Activated CD4-positive, alpha-beta memory T cell treated with anti-CD3 and anti-CD28 coated beads for 36 hours (primary cell): ENCODE measurements at regions of chr10 and their contacts with region 1.

Region 1: GRCh38 chr10:70832852-70833528 is 17.2 kb downstream of the SGPL1 start:
- DNase-seq: no peak
- H3K4me3 Mint-ChIP-seq: peak overlapping the region; percentile 48
- H3K27ac Mint-ChIP-seq: peak overlapping the region; percentile 82
- H3K4me1 Mint-ChIP-seq: peaks cover 85% of the 10 kb centered on the region
- H3K27me3 Mint-ChIP-seq: no peaks in the 10 kb centered on the region

Region 2: GRCh38 chr10:70815504-70816219 is 17.3 kb before region 1 on chr10 and contains the start of gene SGPL1:
- CTCF ChIA-PET with region 1: interaction called, 24 read pairs
- POLR2A ChIA-PET with region 1: interaction called, 14 read pairs
- intact Hi-C with region 1: loop called (anchors 1 kb)
- DNase-seq: peak; percentile 90
- H3K4me3 Mint-ChIP-seq: peak within 1 kb of the TSS; percentile 86
- H3K27ac Mint-ChIP-seq: peak within 1 kb of the TSS; percentile 82
- H3K4me1 Mint-ChIP-seq: peaks cover 49% of the 10 kb centered on the region
- H3K27me3 Mint-ChIP-seq: no peaks in the 10 kb centered on the region
- total RNA-seq, gene SGPL1: 65.6 to 67.0 TPM

Region 3: DNA sequence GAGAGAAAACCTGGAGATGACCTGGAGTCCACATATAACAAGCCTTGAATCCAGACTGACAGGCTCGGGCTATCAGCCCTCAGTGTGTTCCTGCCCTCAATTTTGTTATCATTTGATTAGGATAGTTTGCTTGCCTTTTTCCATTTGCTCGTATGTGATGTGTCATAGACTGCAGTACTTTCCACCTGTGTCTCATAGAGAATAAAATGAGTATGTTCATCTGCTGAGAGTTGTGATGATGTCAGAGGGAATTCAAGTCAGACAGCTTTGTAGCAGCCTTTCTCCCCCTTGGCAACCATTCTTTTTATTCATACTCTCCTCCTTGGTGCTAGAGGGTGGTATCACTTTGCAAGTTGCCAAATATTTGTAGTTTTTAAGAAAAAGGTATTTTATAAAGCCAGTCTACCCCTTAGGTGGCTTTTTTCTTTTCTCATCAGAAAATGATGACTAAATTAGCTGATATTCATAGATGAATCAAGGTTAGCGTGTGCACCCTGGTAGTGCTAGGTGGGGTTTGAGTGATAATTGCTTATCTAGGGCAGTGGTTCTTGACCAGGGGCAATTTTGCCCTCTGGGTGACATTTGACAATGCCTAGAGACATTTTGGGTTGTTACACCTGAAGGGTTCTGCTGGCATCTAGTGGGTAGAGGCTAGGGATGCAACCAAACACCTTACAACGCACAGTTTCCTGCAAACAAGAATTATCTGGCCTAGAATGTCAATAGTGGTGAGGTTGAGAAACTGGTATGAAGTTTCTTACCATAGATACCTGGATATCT is 11.8 kb before region 1 on chr10:
- CTCF ChIA-PET with region 1: interaction called, 24 read pairs
- POLR2A ChIA-PET with region 1: interaction called, 14 read pairs
- intact Hi-C with region 1: loop called (anchors 1 kb)
- DNase-seq: peak; percentile 38
- H3K4me3 Mint-ChIP-seq: peak overlapping the region; percentile 18
- H3K27ac Mint-ChIP-seq: peak overlapping the region; percentile 92
- H3K4me1 Mint-ChIP-seq: peaks cover 65% of the 10 kb centered on the region
- H3K27me3 Mint-ChIP-seq: no peaks in the 10 kb centered on the region

Region 4: DNA sequence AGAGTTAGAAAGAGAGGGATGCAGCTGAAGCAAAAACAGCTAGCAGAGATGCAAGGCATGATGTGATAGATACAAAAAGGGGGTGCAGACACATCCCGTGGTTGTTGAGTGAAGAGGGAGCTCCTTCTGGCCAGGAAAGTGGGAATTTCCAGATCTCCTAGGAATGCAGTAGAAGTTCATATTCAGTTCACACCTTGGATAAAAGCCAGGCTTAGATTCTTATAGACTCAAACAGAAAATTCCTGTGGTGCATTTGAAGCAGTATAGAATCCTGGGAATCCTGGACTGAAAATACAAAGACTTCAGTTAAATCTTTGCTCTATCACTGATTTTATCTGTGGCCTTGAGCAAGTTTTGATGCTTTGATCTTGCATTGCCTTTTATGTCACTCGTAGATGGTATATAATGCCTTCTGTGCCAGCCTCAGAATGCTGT is 16.6 kb after region 1 on chr10:
- CTCF ChIA-PET with region 1: interaction called, 3 read pairs
- POLR2A ChIA-PET with region 1: interaction called, 11 read pairs
- intact Hi-C with region 1: loop called (anchors 2 kb)
- DNase-seq: no peak
- H3K4me3 Mint-ChIP-seq: no peak overlapping the region
- H3K27ac Mint-ChIP-seq: no peak overlapping the region
- H3K4me1 Mint-ChIP-seq: peaks cover 35% of the 10 kb centered on the region
- H3K27me3 Mint-ChIP-seq: no peaks in the 10 kb centered on the region

Region 5: DNA sequence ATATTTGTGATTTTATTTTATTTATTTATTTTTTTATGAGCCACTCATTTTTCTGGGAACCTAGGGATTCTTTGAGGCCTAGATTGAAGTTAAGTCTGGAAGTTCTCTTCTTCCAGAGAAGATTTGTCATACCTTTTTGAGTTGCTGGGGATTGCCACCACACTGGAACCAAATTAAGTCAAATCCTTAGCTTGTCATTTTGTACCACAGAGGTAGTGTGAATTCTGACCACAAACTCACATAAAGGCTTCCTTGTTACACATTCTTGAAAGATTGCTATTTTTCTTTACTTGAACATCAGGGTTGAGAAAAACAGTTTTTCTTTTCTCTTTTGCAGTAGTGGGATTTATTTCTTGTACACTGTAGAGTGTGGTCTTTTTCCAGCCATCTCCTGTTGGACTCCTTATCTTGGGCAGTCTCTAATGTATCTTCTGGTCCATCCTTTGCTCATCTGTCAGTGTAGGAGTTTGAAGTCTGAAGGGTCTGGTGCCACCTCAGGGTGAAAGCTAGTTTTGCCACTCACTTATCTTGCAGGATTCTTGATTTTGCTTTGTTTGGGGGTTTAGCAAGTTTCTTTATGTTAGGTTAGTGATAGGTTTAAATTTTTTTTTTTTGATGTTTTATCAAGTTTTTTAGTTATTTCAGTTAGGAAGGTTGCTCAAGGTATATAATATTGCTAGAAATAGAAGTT is 30.6 kb after region 1 on chr10:
- CTCF ChIA-PET with region 1: no interaction called
- POLR2A ChIA-PET with region 1: interaction called, 5 read pairs
- intact Hi-C with region 1: loop called (anchors 1 kb)
- DNase-seq: no peak
- H3K4me3 Mint-ChIP-seq: no peak overlapping the region
- H3K27ac Mint-ChIP-seq: peak overlapping the region; percentile 82
- H3K4me1 Mint-ChIP-seq: peaks cover 23% of the 10 kb centered on the region
- H3K27me3 Mint-ChIP-seq: no peaks in the 10 kb centered on the region

Region 6: GRCh38 chr10:71766702-71767419 is 933.9 kb after region 1 on chr10:
- CTCF ChIA-PET with region 1: no interaction called
- POLR2A ChIA-PET with region 1: no interaction called
- intact Hi-C with region 1: loop called (anchors 5 kb)
- DNase-seq: peak; percentile 65
- H3K4me3 Mint-ChIP-seq: peak overlapping the region; percentile 38
- H3K27ac Mint-ChIP-seq: peak overlapping the region; percentile 96
- H3K4me1 Mint-ChIP-seq: peaks cover 93% of the 10 kb centered on the region
- H3K27me3 Mint-ChIP-seq: no peaks in the 10 kb centered on the region